HCT116 (cell line): ENCODE measurements at regions of chr11 and their contacts with region 1.

Region 1: GRCh38 chr11:83836883-83837654 is 550.9 kb upstream of the CCDC90B start:
- DNase-seq: peak; percentile 24
- ATAC-seq: peak; percentile 98
- H3K4me3 ChIP-seq: no peak overlapping the region
- H3K27ac ChIP-seq: no peak overlapping the region
- H3K4me1 ChIP-seq: no peaks in the 10 kb centered on the region
- H3K27me3 ChIP-seq: no peaks in the 10 kb centered on the region; the same call in 1 of the 2 replicates
- CTCF ChIP-seq: peak; percentile 43 to 75 (median 74); a peak in 5 of 6 replicates
- POLR2A ChIP-seq: no peak
- RAD21 ChIP-seq: peak; percentile 71

Region 2: DNA sequence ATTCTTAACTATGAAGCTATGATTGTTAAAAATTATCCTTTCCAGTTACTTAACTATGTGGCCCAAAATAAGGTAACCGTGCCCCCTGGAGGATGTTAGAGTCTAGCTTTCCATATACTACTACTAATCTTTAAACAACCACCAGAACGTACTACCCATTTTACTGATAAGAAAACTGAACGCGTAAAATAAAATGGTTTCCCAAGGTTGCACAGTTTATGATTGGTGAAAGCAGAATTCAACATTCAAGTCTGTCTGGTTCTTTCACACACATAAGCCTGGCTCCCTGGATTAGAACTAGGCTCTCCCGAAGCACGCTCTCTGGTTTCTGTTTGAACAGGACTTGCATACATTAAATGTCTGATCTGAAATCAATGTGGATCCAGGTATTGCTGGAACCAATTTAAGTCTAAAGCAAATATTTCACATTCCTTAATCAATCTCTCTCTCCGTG is 113.0 kb before region 1 on chr11:
- CTCF ChIA-PET with region 1: no interaction called
- POLR2A ChIA-PET with region 1: no interaction called
- RAD21 ChIA-PET with region 1: no interaction called
- intact Hi-C with region 1: no loop called
- DNase-seq: peak; percentile 23
- ATAC-seq: no peak
- H3K4me3 ChIP-seq: no peak overlapping the region
- H3K27ac ChIP-seq: no peak overlapping the region
- H3K4me1 ChIP-seq: no peaks in the 10 kb centered on the region
- H3K27me3 ChIP-seq: peaks cover 49% of the 10 kb centered on the region
- CTCF ChIP-seq: peak; percentile 26 to 37 (median 36); a peak in 4 of 6 replicates
- POLR2A ChIP-seq: no peak
- RAD21 ChIP-seq: peak; percentile 59

Region 3: DNA sequence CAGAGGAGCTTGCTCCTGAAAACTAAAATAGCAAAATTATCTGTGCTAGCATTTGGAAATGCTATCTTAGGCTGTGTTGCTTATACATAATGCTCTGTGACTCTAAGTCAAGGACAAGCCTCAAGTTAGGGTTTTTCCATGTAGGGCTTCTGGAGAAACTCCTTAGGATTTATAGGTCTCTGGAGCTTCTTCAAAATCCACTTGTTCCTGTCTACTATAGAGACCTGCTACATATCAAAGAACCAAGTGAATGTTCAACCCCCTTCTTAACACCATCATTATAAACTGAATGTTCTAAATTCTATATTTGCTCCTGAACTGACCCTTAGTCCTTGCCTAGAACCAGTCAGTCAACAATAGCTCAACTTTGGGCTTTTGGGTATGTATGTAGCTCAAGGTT is 27.8 kb before region 1 on chr11:
- CTCF ChIA-PET with region 1: no interaction called
- POLR2A ChIA-PET with region 1: no interaction called
- RAD21 ChIA-PET with region 1: no interaction called
- intact Hi-C with region 1: no loop called
- DNase-seq: no peak
- ATAC-seq: no peak
- H3K4me3 ChIP-seq: no peak overlapping the region
- H3K27ac ChIP-seq: no peak overlapping the region
- H3K4me1 ChIP-seq: no peaks in the 10 kb centered on the region
- H3K27me3 ChIP-seq: peaks cover 30% of the 10 kb centered on the region
- CTCF ChIP-seq: no peak
- POLR2A ChIP-seq: no peak
- RAD21 ChIP-seq: no peak

Region 4: GRCh38 chr11:84036664-84037194 is 199.7 kb after region 1 on chr11:
- CTCF ChIA-PET with region 1: no interaction called
- POLR2A ChIA-PET with region 1: no interaction called
- RAD21 ChIA-PET with region 1: no interaction called
- intact Hi-C with region 1: no loop called
- DNase-seq: no peak
- ATAC-seq: no peak
- H3K4me3 ChIP-seq: no peak overlapping the region
- H3K27ac ChIP-seq: no peak overlapping the region
- H3K4me1 ChIP-seq: no peaks in the 10 kb centered on the region
- H3K27me3 ChIP-seq: no peaks in the 10 kb centered on the region
- CTCF ChIP-seq: no peak
- POLR2A ChIP-seq: no peak
- RAD21 ChIP-seq: no peak

Region 5: DNA sequence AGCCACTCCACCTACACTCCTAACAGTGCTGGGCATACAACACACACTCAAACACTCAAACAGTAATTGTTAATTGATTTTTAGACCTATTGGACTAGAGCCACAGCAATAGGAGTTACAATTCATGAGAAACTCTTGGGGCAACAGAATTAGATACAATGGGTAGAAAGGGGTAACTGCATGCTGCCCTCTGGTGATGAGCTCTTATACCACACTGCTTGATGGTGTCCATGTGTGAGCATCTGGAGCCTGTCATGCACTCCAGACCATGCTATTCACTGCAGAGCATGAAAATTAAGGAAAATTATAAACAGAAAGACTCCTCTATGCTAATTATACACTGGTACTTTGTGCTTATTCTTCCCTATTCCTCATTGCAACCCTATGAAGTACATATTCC is 424.6 kb after region 1 on chr11:
- CTCF ChIA-PET with region 1: interaction called, 4 read pairs
- POLR2A ChIA-PET with region 1: no interaction called
- RAD21 ChIA-PET with region 1: no interaction called
- intact Hi-C with region 1: loop called (anchors 5 kb)
- DNase-seq: no peak
- ATAC-seq: no peak
- H3K4me3 ChIP-seq: no peak overlapping the region
- H3K27ac ChIP-seq: no peak overlapping the region
- H3K4me1 ChIP-seq: no peaks in the 10 kb centered on the region
- H3K27me3 ChIP-seq: no peaks in the 10 kb centered on the region
- CTCF ChIP-seq: 0 out of 6 replicates have a peak, but pooled peaks of 1 of the 3 experiments have one; percentile 19
- POLR2A ChIP-seq: no peak
- RAD21 ChIP-seq: 0 out of 2 replicates have a peak, but pooled peaks have one; percentile 8

Region 6: DNA sequence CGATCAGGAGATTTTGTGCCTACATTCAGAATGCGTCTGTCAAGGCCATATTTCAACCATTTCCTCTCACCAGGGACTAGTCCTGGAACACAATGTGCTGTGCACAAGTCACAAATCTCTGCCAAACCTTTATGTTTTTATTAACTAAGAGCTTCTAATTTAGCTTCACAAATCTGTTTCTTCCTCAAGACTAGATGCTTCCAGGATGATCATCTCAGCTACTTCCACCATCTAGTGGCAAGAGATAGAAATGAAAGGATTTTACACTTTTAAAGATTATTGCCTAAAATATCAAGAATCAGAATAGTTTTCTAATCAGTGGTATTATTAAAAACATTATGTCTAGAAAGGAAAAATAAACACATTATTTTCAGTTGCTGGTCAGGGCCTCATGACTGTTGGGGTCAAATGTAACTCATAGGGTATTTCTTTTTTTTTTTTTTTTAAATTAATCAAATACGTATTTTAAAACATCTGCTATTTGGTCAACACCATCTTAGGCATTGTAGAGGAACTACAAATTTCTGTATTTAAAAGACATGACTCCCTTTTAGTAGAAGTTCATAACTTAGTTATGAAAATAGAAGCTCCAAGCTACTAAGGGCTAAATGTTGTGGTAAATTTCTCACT is 687.5 kb after region 1 on chr11:
- CTCF ChIA-PET with region 1: interaction called, 23 read pairs
- POLR2A ChIA-PET with region 1: no interaction called
- RAD21 ChIA-PET with region 1: no interaction called
- intact Hi-C with region 1: loop called (anchors 1 kb)
- DNase-seq: no peak
- ATAC-seq: no peak
- H3K4me3 ChIP-seq: no peak overlapping the region
- H3K27ac ChIP-seq: no peak overlapping the region
- H3K4me1 ChIP-seq: no peaks in the 10 kb centered on the region
- H3K27me3 ChIP-seq: no peaks in the 10 kb centered on the region
- CTCF ChIP-seq: peak; percentile 20 to 47 (median 25); a peak in 4 of 6 replicates
- POLR2A ChIP-seq: no peak
- RAD21 ChIP-seq: peak; percentile 45; the same call in 1 of the 2 replicates

Region 7: DNA sequence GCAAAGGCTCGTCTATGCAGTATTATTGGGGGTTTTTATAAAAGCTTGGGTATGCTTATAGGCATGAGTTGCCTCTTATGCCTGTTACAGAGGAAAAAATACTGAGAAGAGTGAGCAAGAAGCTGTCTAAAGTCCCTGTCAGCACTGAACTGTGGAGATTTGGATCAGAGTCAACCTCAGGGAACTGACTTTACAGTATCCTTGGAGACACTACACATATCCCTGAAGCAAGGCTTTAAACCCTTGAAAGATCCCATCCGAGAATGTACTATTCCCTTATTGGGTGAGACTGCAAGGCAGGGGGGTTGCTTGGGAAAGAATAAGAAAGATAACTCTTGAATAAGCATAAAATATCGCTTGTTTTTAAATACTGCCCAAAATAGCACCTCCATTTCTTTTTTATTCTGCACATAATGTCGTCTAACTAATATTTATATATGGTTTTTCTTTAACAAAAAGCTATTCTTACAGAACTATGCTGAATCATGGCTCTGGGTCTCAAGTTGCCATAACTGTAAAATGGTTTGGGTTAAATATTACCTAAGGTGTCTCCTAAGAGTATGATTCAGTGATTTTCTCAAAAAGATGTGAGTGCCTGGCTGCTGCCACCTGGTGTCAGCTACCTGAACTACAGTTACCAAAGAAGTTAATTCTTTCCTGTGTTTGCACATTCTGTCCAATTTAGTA is 727.3 kb after region 1 on chr11:
- CTCF ChIA-PET with region 1: interaction called, 7 read pairs
- POLR2A ChIA-PET with region 1: no interaction called
- RAD21 ChIA-PET with region 1: interaction called in 1 of 2 experiments, 3 read pairs
- intact Hi-C with region 1: loop called (anchors 1 kb)
- DNase-seq: peak; percentile 38
- ATAC-seq: peak; percentile 63
- H3K4me3 ChIP-seq: no peak overlapping the region
- H3K27ac ChIP-seq: no peak overlapping the region
- H3K4me1 ChIP-seq: no peaks in the 10 kb centered on the region
- H3K27me3 ChIP-seq: no peaks in the 10 kb centered on the region
- CTCF ChIP-seq: peak; percentile 36 to 83 (median 71); a peak in 5 of 6 replicates
- POLR2A ChIP-seq: no peak
- RAD21 ChIP-seq: peak; percentile 42; the same call in 1 of the 2 replicates